ENCODE measurements at regions of chr13 and their contacts with region 1.

Region 1: DNA sequence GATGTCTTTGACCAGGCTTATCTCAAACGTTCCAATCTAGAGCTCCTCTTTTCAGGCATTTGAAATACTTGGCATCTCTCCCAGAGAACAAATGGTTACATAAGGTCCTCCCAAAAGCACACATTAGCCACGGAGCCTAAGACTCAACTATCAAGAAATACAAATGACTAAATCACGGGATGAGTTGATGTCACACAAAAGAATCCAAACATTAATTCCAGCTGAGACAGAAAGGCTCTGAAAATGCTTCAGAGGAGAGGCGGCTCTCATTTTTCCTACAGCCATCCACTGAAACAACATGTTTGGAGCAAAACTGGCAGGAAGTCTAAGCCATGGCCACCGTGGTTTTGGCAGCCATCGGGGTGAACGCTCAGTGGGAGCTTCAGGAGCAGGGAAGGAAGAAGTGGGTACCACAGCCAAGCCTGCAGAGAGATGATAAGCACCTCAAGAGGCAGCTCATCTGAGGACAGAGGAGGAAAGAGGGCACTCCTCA is 122.5 kb downstream of the STK24 start:
- DNase-seq: peak; percentile 83
- H3K4me3 ChIP-seq: no peak overlapping the region; the same call in 1 of the 2 replicates
- H3K27ac ChIP-seq: peak overlapping the region; percentile 94
- H3K27me3 ChIP-seq: no peaks in the 10 kb centered on the region
- CTCF ChIP-seq: no peak

Region 2: GRCh38 chr13:98327371-98328270 is 126.8 kb before region 1 on chr13:
- CTCF ChIA-PET with region 1: no interaction called
- POLR2A ChIA-PET with region 1: no interaction called
- DNase-seq: peak; percentile 18
- H3K4me3 ChIP-seq: no peak overlapping the region
- H3K27ac ChIP-seq: peak overlapping the region; percentile 65
- H3K27me3 ChIP-seq: no peaks in the 10 kb centered on the region
- CTCF ChIP-seq: no peak

Region 3: GRCh38 chr13:98370806-98371515 is 83.5 kb before region 1 on chr13:
- CTCF ChIA-PET with region 1: no interaction called
- POLR2A ChIA-PET with region 1: interaction called, 17 read pairs
- DNase-seq: peak; percentile 92
- H3K4me3 ChIP-seq: peak overlapping the region; percentile 32; the same call in 1 of the 2 replicates
- H3K27ac ChIP-seq: peak overlapping the region; percentile 96
- H3K27me3 ChIP-seq: no peaks in the 10 kb centered on the region
- CTCF ChIP-seq: no peak

Measured in AG04450 (cell line).